ENCODE measurements at regions of chr18 and their contacts with region 1.

Region 1: DNA sequence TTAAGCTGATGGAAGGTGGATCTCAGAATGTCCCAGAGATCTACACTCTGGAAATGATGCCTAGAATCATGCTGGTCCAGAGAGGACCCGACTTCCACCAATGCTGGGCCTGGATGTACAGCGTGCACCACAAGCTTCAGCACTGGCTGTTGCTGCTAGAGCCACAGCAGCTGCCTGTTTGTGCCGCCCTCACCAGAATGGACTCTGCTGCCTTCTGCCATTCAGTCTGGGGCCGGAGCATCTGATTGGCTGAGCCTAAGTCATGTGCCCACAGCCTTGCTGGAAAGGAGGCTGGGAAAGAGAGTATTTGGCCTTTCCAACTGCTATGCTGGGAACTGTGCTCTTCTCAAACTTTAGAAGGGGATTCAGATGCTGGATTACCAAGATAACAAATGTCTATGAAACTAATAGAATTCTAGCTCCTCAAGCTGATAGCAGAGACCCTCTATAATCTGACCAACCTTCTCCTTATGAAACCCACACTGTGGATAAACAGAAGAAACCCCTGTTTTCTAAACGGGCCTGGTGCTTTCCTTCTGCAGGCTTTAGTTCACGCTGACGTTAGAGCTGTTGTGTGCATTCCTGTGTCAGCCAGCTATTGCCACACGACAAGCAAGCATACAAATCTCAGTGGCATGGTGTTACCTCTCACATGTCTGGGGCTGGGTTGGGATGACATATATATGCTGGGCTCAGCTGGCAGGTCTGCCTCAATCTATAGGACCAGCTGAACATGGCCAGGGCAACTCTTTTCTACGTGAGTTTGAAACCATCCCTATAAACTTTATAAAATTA is 4.1 kb upstream of the LOXHD1 start:
- DNase-seq: no peak
- H3K4me3 ChIP-seq: no peak overlapping the region
- H3K4me3 Mint-ChIP-seq: no peak overlapping the region
- H3K27ac ChIP-seq: no peak overlapping the region
- H3K27ac Mint-ChIP-seq: no peak overlapping the region
- H3K4me1 ChIP-seq: peaks cover 4% of the 10 kb centered on the region
- H3K4me1 Mint-ChIP-seq: no peaks in the 10 kb centered on the region
- H3K27me3 ChIP-seq: no peaks in the 10 kb centered on the region
- H3K27me3 Mint-ChIP-seq: peaks cover 2 to 7% of the 10 kb centered on the region in 2 donors

Region 2: DNA sequence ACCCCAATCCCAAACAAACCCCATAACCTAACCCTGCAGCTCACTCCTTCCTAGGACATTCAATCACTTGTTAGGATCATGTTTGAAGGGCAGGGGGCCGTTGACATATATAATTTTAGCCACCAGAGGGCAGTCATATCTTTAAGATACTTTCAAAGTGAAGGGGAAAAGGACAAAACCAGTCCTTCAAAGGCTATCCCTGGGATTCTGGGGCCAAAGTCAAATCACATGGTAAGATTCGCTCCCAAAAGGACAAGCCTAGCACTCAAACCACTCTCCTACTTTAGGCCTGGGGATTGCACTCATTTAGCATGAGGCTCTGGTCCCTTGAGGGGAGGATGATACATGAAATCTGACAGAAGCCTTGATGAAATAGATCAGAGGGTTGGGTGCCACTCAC is 512.3 kb before region 1 on chr18:
- CTCF ChIA-PET with region 1: interaction called, 53 read pairs
- POLR2A ChIA-PET with region 1: no interaction called
- DNase-seq: peak; percentile 10 to 60 (median 42)
- H3K4me3 ChIP-seq: no peak overlapping the region
- H3K4me3 Mint-ChIP-seq: no peak overlapping the region
- H3K27ac ChIP-seq: no peak overlapping the region
- H3K27ac Mint-ChIP-seq: peak overlapping the region in 6 of 8 donors; percentile 0 to 79 (median 66)
- H3K4me1 ChIP-seq: peaks cover 41% of the 10 kb centered on the region
- H3K4me1 Mint-ChIP-seq: peaks cover 29 to 41% (median 39%) of the 10 kb centered on the region in 3 donors
- H3K27me3 ChIP-seq: no peaks in the 10 kb centered on the region
- H3K27me3 Mint-ChIP-seq: no peaks in the 10 kb centered on the region

Region 3: GRCh38 chr18:46281185-46282176 is 379.7 kb before region 1 on chr18:
- CTCF ChIA-PET with region 1: interaction called, 28 read pairs
- POLR2A ChIA-PET with region 1: no interaction called
- DNase-seq: peak; percentile 18 to 61 (median 27)
- H3K4me3 ChIP-seq: no peak overlapping the region
- H3K4me3 Mint-ChIP-seq: no peak overlapping the region
- H3K27ac ChIP-seq: no peak overlapping the region
- H3K27ac Mint-ChIP-seq: no peak overlapping the region
- H3K4me1 ChIP-seq: no peaks in the 10 kb centered on the region
- H3K4me1 Mint-ChIP-seq: peaks cover 7 to 15% (median 10%) of the 10 kb centered on the region in 3 donors
- H3K27me3 ChIP-seq: no peaks in the 10 kb centered on the region
- H3K27me3 Mint-ChIP-seq: no peaks in the 10 kb centered on the region

Region 4: DNA sequence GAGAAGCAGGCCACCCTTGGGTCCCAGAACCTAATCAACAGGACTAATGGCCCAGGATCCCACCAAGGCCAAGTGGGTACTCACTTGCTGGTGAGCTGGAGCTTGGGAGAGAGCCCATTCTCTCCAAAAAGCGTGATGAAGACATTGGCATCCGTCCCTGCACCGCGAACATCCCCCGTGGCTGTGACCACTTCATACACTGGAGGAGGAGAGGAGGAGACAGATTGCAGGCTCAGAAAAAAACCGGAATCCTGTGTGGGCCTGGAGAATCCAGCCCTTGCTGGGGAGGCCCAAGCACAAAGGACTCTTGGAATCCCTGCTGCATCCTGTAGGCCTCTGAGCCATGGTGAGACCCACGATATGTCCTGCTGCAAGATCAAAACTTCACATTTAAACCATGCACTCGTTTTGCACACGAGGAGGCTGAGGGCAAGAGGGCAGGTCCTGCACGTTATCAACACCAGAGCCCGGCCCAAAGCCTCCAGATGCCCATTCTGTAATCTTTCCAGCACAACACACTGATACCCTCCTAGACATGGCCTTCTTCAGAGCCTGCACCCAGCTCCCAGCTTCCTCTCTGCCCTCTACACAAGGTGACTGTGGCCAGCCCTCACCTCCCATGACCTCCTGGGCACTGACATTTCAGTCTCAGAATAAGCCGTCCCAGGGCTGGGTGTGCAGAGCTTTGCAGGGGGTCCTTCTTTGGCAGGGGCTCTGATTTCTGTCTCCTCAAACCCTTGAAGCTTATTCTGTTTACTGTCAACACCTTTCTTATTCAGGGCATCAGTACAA is 11.9 kb before region 1 on chr18:
- CTCF ChIA-PET with region 1: interaction called, 22 read pairs
- POLR2A ChIA-PET with region 1: no interaction called
- DNase-seq: no peak
- H3K4me3 ChIP-seq: no peak overlapping the region
- H3K4me3 Mint-ChIP-seq: no peak overlapping the region
- H3K27ac ChIP-seq: no peak overlapping the region
- H3K27ac Mint-ChIP-seq: no peak overlapping the region
- H3K4me1 ChIP-seq: no peaks in the 10 kb centered on the region
- H3K4me1 Mint-ChIP-seq: no peaks in the 10 kb centered on the region
- H3K27me3 ChIP-seq: no peaks in the 10 kb centered on the region
- H3K27me3 Mint-ChIP-seq: peaks cover 0 to 4% of the 10 kb centered on the region in 2 donors

Measured in CD8-positive, alpha-beta memory T cell (primary cell).